ENCODE measurements at regions of chr7 and their contacts with region 1.

Region 1: DNA sequence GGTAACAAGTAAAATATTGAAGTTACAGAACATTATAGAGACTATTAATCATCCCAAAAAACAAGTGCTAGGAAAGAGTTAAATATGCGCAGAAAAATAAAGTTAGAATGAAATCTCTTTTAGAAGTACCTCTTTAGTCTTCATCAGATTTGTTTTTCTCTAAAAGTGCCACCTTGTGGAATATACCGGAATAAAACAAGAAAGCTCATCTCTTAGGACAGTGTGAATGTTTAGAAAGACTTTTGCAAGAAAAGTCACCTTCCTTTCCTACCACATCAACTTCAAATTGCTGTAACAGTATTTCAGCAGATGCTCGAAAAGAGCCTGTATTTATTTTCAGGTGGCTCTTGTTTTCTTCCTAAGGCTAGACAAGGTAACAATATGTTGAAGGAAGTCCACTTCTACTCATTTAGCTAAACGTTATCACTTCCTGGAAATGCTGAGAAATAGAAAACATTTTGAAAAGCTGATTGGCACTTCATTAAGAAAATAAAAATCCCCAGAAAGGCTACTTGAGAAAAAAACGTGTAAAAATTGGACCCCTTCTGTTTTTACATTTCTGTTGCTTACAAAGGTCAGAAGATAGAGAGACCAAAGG is 19.8 kb upstream of the FAM133B start:
- DNase-seq: no peak
- ATAC-seq: peak; percentile 66
- H3K4me3 Mint-ChIP-seq: no peak overlapping the region
- H3K27ac Mint-ChIP-seq: peak overlapping the region; percentile 74
- H3K4me1 Mint-ChIP-seq: peaks cover 43% of the 10 kb centered on the region
- H3K27me3 Mint-ChIP-seq: no peaks in the 10 kb centered on the region

Region 2: GRCh38 chr7:92595281-92595680 is 14.7 kb before region 1 on chr7:
- CTCF ChIA-PET with region 1: interaction called, 46 read pairs
- DNase-seq: no peak
- ATAC-seq: no peak
- H3K4me3 Mint-ChIP-seq: no peak overlapping the region
- H3K27ac Mint-ChIP-seq: no peak overlapping the region
- H3K4me1 Mint-ChIP-seq: peaks cover 8% of the 10 kb centered on the region
- H3K27me3 Mint-ChIP-seq: peaks cover 3% of the 10 kb centered on the region

Region 3: GRCh38 chr7:92667816-92668535 is 58.0 kb after region 1 on chr7:
- CTCF ChIA-PET with region 1: no interaction called
- DNase-seq: no peak
- ATAC-seq: no peak
- H3K4me3 Mint-ChIP-seq: peak overlapping the region; percentile 15
- H3K27ac Mint-ChIP-seq: peak overlapping the region; percentile 72
- H3K4me1 Mint-ChIP-seq: peaks cover 78% of the 10 kb centered on the region
- H3K27me3 Mint-ChIP-seq: no peaks in the 10 kb centered on the region

Region 4: GRCh38 chr7:92717993-92718716 is 108.1 kb after region 1 on chr7:
- CTCF ChIA-PET with region 1: no interaction called
- DNase-seq: peak; percentile 79
- ATAC-seq: peak; percentile 92
- H3K4me3 Mint-ChIP-seq: peak overlapping the region; percentile 74
- H3K27ac Mint-ChIP-seq: peak overlapping the region; percentile 83
- H3K4me1 Mint-ChIP-seq: peaks cover 56% of the 10 kb centered on the region
- H3K27me3 Mint-ChIP-seq: no peaks in the 10 kb centered on the region